ENCODE measurements at regions of chr15 and their contacts with region 1.

Region 1: DNA sequence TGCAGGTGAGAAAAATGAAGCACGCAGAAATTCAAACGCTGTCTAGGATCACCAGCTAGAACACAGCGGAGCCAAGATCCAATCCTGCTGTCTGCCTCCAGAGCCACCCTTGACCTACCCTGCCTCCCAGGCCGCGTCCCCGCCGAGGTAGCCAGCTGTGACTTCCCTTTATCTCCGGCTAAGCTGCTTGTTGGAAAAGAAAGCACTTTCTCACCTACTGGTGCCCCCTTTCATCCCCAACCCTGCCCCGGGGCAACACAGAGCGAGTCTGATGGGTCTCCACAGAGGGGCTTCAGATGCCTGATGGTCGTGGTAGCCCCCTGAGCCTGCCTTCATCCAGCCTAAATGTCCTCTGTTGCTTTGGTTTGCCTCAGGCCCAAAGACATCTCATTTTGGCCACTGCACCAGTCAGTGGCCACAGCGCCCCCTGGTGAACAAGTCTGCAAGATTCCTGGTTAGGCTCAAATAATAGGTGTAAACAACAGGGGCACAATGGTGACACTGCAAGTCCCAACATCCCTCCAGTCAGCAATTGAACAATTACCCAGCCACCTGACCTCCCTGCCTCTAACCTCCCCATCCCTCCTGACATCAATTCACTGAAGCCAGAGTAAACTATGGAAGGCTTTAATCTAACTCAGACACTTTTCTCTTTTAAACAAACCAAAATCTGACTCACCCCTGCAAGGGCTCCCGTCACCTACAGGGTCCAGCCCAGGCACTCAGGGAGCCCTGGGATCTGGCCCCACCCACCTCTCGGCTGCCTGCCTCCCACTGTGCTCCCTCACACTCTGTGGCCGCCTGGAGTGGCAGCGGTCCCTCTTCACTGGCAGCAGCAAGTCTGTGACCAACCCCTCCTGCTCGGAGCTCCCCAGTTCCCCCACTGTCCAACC is 27.3 kb upstream of the BCL2L10 start:
- DNase-seq: peak; percentile 70
- H3K4me3 ChIP-seq: no peak overlapping the region
- H3K27ac ChIP-seq: no peak overlapping the region
- H3K4me1 ChIP-seq: no peaks in the 10 kb centered on the region
- CTCF ChIP-seq: peak; percentile 96

Region 2: DNA sequence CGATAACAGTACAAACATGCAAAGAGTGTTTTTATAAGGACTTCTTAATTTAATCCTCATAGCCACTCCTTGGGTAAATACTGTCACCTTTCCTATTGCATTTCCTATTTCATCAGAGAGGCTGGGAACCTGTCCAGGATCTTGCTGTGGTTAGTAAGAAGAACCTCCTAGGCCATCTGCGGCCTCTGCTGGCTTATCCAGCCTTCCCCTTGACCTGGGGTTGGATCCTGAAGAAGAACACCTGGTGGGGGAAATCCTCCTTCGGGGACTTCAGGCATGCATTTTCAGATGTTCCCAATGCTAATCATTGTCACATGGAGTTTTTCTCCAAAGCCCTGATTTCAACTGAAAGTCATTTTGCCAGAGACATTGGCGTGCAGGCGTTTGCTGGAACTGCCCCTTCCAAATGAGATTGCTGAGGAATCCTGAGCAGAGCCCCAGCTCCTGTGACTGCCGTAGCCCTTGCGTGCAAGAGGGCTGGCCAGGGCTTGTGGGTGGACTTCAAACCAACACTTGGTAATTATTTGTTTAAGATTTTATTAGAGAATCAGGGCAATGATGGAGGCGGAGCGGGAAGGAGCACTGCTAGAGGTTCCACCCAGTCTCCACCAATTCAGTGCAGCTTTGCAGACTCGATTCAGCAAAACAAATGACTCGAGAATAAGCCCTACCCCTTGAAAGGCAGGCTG is 772.7 kb before region 1 on chr15:
- CTCF ChIA-PET with region 1: no interaction called
- POLR2A ChIA-PET with region 1: no interaction called
- intact Hi-C with region 1: no loop called
- DNase-seq: no peak
- H3K4me3 ChIP-seq: no peak overlapping the region
- H3K27ac ChIP-seq: no peak overlapping the region
- H3K4me1 ChIP-seq: no peaks in the 10 kb centered on the region
- CTCF ChIP-seq: no peak

Region 3: DNA sequence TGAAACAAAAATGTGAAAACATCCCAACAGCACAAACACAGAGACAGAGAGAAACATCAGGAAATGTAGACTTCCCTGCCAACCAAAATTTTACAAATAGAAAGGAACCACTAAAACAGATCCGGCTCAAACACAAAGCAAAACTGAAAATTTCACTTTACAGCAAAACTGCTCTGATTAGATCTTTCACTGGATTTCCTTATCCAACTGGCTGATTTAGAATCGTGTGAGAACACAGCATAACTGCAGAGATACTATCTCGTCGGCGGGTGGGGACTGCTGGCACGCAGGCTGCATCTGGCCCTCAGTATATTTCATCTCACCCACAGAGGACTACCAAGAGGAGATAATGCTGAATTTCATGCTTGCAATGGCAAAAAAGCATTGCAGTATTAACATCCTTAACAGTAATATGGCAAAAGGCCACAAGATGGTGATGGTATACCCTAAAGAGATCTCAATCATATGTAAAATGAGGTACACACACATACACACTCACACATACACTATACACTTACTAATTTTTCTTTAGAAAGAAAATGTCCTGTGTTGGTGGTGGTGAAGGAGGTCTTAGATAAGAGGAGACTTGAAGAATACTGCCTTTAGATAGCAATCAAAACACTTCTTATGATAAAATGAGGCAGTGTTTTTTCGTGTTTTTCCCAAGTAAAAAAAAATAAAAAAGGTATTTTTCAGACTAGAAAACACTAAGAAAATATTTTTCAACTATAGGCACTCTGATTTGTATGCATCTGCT is 157.7 kb before region 1 on chr15:
- CTCF ChIA-PET with region 1: no interaction called
- POLR2A ChIA-PET with region 1: no interaction called
- intact Hi-C with region 1: loop called (anchors 1 kb)
- DNase-seq: peak; percentile 88
- H3K4me3 ChIP-seq: peak overlapping the region; percentile 22
- H3K27ac ChIP-seq: no peak overlapping the region
- H3K4me1 ChIP-seq: peaks cover 14% of the 10 kb centered on the region
- CTCF ChIP-seq: peak; percentile 93

Region 4: GRCh38 chr15:52078876-52079700 is 60.8 kb before region 1 on chr15:
- CTCF ChIA-PET with region 1: no interaction called
- POLR2A ChIA-PET with region 1: no interaction called
- intact Hi-C with region 1: loop called (anchors 5 kb)
- DNase-seq: peak; percentile 87
- H3K4me3 ChIP-seq: no peak overlapping the region
- H3K27ac ChIP-seq: no peak overlapping the region
- H3K4me1 ChIP-seq: peaks cover 6% of the 10 kb centered on the region
- CTCF ChIP-seq: peak; percentile 97

Measured in OCI-LY7 (cell line).